ENCODE measurements at regions of chr10 and their contacts with region 1.

Region 1: GRCh38 chr10:110137142-110137545 is 70.3 kb upstream of the MXI1 start:
- DNase-seq: peak; percentile 82
- ATAC-seq: peak; percentile 67
- H3K4me3 ChIP-seq: no peak overlapping the region
- H3K4me3 Mint-ChIP-seq: peak overlapping the region; percentile 18
- H3K27ac ChIP-seq: peak overlapping the region; percentile 11 to 58
- H3K27ac Mint-ChIP-seq: peak overlapping the region; percentile 47
- H3K4me1 ChIP-seq: peaks cover 20 to 26% of the 10 kb centered on the region in 2 donors
- H3K4me1 Mint-ChIP-seq: peaks cover 37% of the 10 kb centered on the region
- H3K27me3 ChIP-seq: no peaks in the 10 kb centered on the region
- H3K27me3 Mint-ChIP-seq: no peaks in the 10 kb centered on the region
- CTCF ChIP-seq: peak; percentile 85

Region 2: DNA sequence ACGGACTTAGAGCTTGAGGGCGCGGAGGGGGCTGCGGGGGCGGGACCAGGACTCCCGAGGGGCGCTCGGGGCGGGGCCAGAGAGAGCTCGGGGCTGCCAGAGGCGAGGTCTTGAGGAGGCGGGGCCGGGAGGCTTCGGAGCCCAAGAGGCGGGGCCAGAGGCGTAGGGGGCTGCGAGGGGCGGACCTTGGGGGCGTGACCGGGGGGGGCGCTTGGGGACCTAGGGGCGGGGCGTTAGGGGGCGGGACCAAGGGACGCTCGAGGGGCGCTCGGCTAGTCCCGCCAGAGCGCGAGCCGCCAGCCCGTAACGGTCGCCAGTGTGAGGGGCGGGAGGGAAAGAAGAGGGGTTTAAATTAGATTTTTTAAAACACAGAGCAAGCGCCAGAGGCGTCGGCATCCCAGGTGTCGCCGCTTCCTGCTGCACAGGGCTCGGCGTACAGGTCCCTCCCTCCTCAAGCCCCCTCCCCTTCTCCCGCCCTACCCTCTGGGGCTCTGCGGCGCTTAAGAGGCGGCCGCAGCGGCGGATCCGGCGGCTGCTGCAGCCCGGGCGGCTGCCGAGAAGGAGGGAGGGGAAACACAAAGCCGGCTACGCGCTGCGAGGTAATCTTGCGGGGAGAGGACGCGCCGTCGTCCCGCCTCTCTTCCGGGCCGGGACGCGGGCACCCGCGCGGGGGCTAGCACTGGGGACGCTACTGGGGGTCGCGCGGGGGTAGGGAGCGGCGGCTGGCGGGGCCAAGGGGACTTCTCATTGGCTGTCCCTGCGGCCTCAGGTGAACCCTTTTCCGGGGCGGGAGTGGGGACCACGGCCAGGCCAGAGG is 129.2 kb before region 1 on chr10 and contains the start of gene ADD3:
- CTCF ChIA-PET with region 1: interaction called, 4 read pairs
- POLR2A ChIA-PET with region 1: no interaction called
- intact Hi-C with region 1: loop called (anchors 2 kb)
- DNase-seq: peak; percentile 95
- ATAC-seq: peak; percentile 86
- H3K4me3 ChIP-seq: peak within 1 kb of the TSS; percentile 73 to 95 (median 76)
- H3K4me3 Mint-ChIP-seq: no peak within 1 kb of the TSS
- H3K27ac ChIP-seq: peak within 1 kb of the TSS; percentile 72 to 91
- H3K27ac Mint-ChIP-seq: no peak within 1 kb of the TSS
- H3K4me1 ChIP-seq: peaks cover 33 to 40% of the 10 kb centered on the region in 2 donors
- H3K4me1 Mint-ChIP-seq: peaks cover 49% of the 10 kb centered on the region
- H3K27me3 ChIP-seq: no peaks in the 10 kb centered on the region
- H3K27me3 Mint-ChIP-seq: no peaks in the 10 kb centered on the region
- CTCF ChIP-seq: no peak
- total RNA-seq, gene ADD3: 156 and 191 TPM in 2 replicates

Region 3: DNA sequence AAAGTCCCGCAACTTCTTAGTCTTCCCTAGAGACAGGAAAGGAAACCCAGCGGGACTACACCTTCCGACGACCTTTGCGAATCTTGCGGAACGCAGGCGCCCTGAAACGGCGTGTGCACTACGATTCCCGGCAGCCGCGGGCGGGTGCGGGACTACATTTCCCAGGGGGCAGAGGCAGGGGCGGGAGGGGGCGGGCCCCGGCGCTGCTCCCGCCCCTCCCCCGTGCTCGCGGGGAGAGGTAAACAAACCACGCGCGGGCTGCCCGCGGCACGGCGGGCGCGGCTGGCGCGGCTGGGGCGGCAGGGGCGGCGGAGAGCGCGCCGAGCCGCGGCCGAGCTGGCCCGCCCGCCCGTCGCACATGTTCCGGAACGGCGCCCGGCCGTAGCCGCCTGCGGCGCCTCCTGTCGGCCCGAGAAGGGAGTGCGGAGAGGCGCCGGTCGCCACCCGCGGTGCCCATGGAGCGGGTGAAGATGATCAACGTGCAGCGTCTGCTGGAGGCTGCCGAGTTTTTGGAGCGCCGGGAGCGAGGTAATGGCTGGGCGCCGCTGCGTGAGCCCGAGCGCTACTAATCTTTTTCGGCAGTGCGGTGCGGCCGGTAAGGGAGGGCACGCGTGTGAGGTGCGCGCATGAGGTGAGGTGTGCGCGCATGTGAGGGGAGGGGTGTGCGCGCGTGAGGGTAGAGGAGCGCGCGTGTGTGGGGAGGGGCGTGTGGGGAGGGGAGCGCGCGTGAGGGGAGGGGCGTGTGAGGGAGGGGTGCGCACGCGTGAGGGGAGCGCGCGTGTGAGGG is 88.8 kb after region 1 on chr10:
- CTCF ChIA-PET with region 1: interaction called, 13 read pairs
- POLR2A ChIA-PET with region 1: interaction called, 6 read pairs
- intact Hi-C with region 1: loop called (anchors 1 kb)
- DNase-seq: peak; percentile 95
- ATAC-seq: peak; percentile 53
- H3K4me3 ChIP-seq: peak overlapping the region; percentile 42 to 90 (median 77)
- H3K4me3 Mint-ChIP-seq: peak overlapping the region; percentile 97
- H3K27ac ChIP-seq: peak overlapping the region; percentile 79 to 84
- H3K27ac Mint-ChIP-seq: peak overlapping the region; percentile 97
- H3K4me1 ChIP-seq: peaks cover 22 to 25% of the 10 kb centered on the region in 2 donors
- H3K4me1 Mint-ChIP-seq: peaks cover 38% of the 10 kb centered on the region
- H3K27me3 ChIP-seq: peaks cover 0 to 5% (median 2%) of the 10 kb centered on the region in 4 experiments
- H3K27me3 Mint-ChIP-seq: peaks cover 3% of the 10 kb centered on the region
- CTCF ChIP-seq: peak; percentile 65

Region 4: DNA sequence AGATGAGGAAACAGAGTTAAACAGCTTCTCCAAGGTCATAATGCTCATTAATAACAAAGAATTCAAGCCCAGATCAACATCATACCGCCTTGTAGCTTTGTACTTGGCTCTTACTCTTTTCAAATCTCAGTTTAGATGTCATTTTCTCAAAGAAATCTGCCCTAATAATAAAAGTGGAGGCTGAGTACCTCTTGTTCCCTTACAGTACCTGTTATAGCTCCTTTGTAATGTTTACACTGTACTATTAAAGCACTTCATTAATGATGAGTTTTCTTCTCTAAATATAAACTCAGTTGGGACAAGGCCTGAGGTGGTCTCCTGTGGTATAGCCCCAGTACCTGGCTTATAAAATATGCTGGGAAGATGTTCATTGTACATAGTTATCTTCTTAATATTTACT is 159.8 kb after region 1 on chr10:
- CTCF ChIA-PET with region 1: interaction called, 10 read pairs
- POLR2A ChIA-PET with region 1: no interaction called
- intact Hi-C with region 1: no loop called
- DNase-seq: no peak
- ATAC-seq: no peak
- H3K4me3 ChIP-seq: no peak overlapping the region
- H3K4me3 Mint-ChIP-seq: no peak overlapping the region
- H3K27ac ChIP-seq: no peak overlapping the region
- H3K27ac Mint-ChIP-seq: no peak overlapping the region
- H3K4me1 ChIP-seq: peaks cover 0 to 2% of the 10 kb centered on the region in 2 donors
- H3K4me1 Mint-ChIP-seq: peaks cover 15% of the 10 kb centered on the region
- H3K27me3 ChIP-seq: no peaks in the 10 kb centered on the region
- H3K27me3 Mint-ChIP-seq: no peaks in the 10 kb centered on the region
- CTCF ChIP-seq: no peak

Region 5: GRCh38 chr10:110547139-110547761 is 410.1 kb after region 1 on chr10:
- CTCF ChIA-PET with region 1: interaction called, 6 read pairs
- POLR2A ChIA-PET with region 1: no interaction called
- intact Hi-C with region 1: loop called (anchors 1 kb)
- DNase-seq: peak; percentile 76
- ATAC-seq: peak; percentile 68
- H3K4me3 ChIP-seq: no peak overlapping the region
- H3K4me3 Mint-ChIP-seq: no peak overlapping the region
- H3K27ac ChIP-seq: no peak overlapping the region
- H3K27ac Mint-ChIP-seq: no peak overlapping the region
- H3K4me1 ChIP-seq: no peaks in the 10 kb centered on the region
- H3K4me1 Mint-ChIP-seq: peaks cover 4% of the 10 kb centered on the region
- H3K27me3 ChIP-seq: peaks cover 0 to 9% (median 4%) of the 10 kb centered on the region in 4 experiments
- H3K27me3 Mint-ChIP-seq: peaks cover 24% of the 10 kb centered on the region
- CTCF ChIP-seq: peak; percentile 85

Region 6: GRCh38 chr10:110706690-110707098 is 569.5 kb after region 1 on chr10:
- CTCF ChIA-PET with region 1: no interaction called
- POLR2A ChIA-PET with region 1: no interaction called
- intact Hi-C with region 1: no loop called
- DNase-seq: no peak
- ATAC-seq: no peak
- H3K4me3 ChIP-seq: no peak overlapping the region
- H3K4me3 Mint-ChIP-seq: no peak overlapping the region
- H3K27ac ChIP-seq: no peak overlapping the region
- H3K27ac Mint-ChIP-seq: no peak overlapping the region
- H3K4me1 ChIP-seq: no peaks in the 10 kb centered on the region
- H3K4me1 Mint-ChIP-seq: no peaks in the 10 kb centered on the region
- H3K27me3 ChIP-seq: no peaks in the 10 kb centered on the region
- H3K27me3 Mint-ChIP-seq: peaks cover 11% of the 10 kb centered on the region
- CTCF ChIP-seq: no peak

Measured in B cell (primary cell).